Activated naive CD4-positive, alpha-beta T cell treated with anti-CD3 and anti-CD28 coated beads for 36 hours (primary cell): ENCODE measurements at regions of chr6 and their contacts with region 1.

Region 1: DNA sequence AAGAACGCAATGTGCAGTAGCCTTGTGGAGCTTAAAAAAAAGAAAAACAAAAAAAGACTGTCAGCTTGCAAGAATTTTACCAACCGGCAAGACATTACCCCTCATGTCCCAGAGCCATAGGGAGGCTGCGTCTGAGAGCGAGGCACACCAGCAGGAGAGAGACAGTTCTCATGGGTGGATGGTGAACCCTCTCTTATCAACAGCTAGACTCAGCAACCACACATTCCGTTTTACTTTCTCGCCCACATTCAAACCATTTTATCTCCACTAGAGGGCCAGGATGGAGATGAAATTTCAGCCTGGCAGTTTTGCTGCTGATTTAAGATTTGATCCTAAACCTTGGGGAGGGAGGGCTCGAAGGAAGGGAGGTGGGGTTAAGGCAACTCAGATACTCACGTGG is 247.0 kb downstream of the ATXN1 start:
- DNase-seq: peak; percentile 48
- H3K4me3 Mint-ChIP-seq: no peak overlapping the region
- H3K27ac Mint-ChIP-seq: no peak overlapping the region
- H3K4me1 Mint-ChIP-seq: peaks cover 53% of the 10 kb centered on the region
- H3K27me3 Mint-ChIP-seq: no peaks in the 10 kb centered on the region

Region 2: GRCh38 chr6:16332175-16332542 is 182.1 kb before region 1 on chr6:
- CTCF ChIA-PET with region 1: interaction called, 27 read pairs
- intact Hi-C with region 1: loop called (anchors 1 kb)
- DNase-seq: peak; percentile 94
- H3K4me3 Mint-ChIP-seq: no peak overlapping the region
- H3K27ac Mint-ChIP-seq: no peak overlapping the region
- H3K4me1 Mint-ChIP-seq: no peaks in the 10 kb centered on the region
- H3K27me3 Mint-ChIP-seq: no peaks in the 10 kb centered on the region

Region 3: GRCh38 chr6:16420715-16421461 is 93.4 kb before region 1 on chr6:
- CTCF ChIA-PET with region 1: interaction called, 3 read pairs
- intact Hi-C with region 1: loop called (anchors 1 kb)
- DNase-seq: peak; percentile 66
- H3K4me3 Mint-ChIP-seq: peak overlapping the region; percentile 45
- H3K27ac Mint-ChIP-seq: peak overlapping the region; percentile 95
- H3K4me1 Mint-ChIP-seq: peaks cover 42% of the 10 kb centered on the region
- H3K27me3 Mint-ChIP-seq: no peaks in the 10 kb centered on the region

Region 4: GRCh38 chr6:16481697-16482399 is 32.4 kb before region 1 on chr6:
- CTCF ChIA-PET with region 1: interaction called, 6 read pairs
- intact Hi-C with region 1: loop called (anchors 1 kb)
- DNase-seq: peak; percentile 79
- H3K4me3 Mint-ChIP-seq: peak overlapping the region; percentile 32
- H3K27ac Mint-ChIP-seq: peak overlapping the region; percentile 75
- H3K4me1 Mint-ChIP-seq: peaks cover 70% of the 10 kb centered on the region
- H3K27me3 Mint-ChIP-seq: no peaks in the 10 kb centered on the region

Region 5: GRCh38 chr6:16533721-16534136 is 19.5 kb after region 1 on chr6:
- CTCF ChIA-PET with region 1: interaction called, 13 read pairs
- intact Hi-C with region 1: loop called (anchors 1 kb)
- DNase-seq: peak; percentile 22
- H3K4me3 Mint-ChIP-seq: no peak overlapping the region
- H3K27ac Mint-ChIP-seq: no peak overlapping the region
- H3K4me1 Mint-ChIP-seq: peaks cover 21% of the 10 kb centered on the region
- H3K27me3 Mint-ChIP-seq: no peaks in the 10 kb centered on the region

Region 6: GRCh38 chr6:16657768-16658167 is 143.5 kb after region 1 on chr6:
- CTCF ChIA-PET with region 1: interaction called, 5 read pairs
- intact Hi-C with region 1: loop called (anchors 2 kb)
- DNase-seq: peak; percentile 9
- H3K4me3 Mint-ChIP-seq: peak overlapping the region; percentile 2
- H3K27ac Mint-ChIP-seq: peak overlapping the region; percentile 32
- H3K4me1 Mint-ChIP-seq: peaks cover 43% of the 10 kb centered on the region
- H3K27me3 Mint-ChIP-seq: no peaks in the 10 kb centered on the region

Region 7: GRCh38 chr6:16894301-16894700 is 380.1 kb after region 1 on chr6:
- CTCF ChIA-PET with region 1: no interaction called
- intact Hi-C with region 1: no loop called
- DNase-seq: no peak
- H3K4me3 Mint-ChIP-seq: no peak overlapping the region
- H3K27ac Mint-ChIP-seq: no peak overlapping the region
- H3K4me1 Mint-ChIP-seq: no peaks in the 10 kb centered on the region
- H3K27me3 Mint-ChIP-seq: peaks cover 10% of the 10 kb centered on the region

Region 8: GRCh38 chr6:16964553-16965501 is 450.6 kb after region 1 on chr6:
- CTCF ChIA-PET with region 1: interaction called, 5 read pairs
- intact Hi-C with region 1: loop called (anchors 2 kb)
- DNase-seq: peak; percentile 79
- H3K4me3 Mint-ChIP-seq: no peak overlapping the region
- H3K27ac Mint-ChIP-seq: no peak overlapping the region
- H3K4me1 Mint-ChIP-seq: peaks cover 5% of the 10 kb centered on the region
- H3K27me3 Mint-ChIP-seq: peaks cover 23% of the 10 kb centered on the region